Dorsolateral prefrontal cortex (tissue), 120 donors: ENCODE measurements at regions of chr9 and their contacts with region 1.

Region 1: GRCh38 chr9:34633851-34634550 is 3.6 kb downstream of the SIGMAR1 start:
- DNase-seq: peak in 8 of 10 donors; percentile 61 to 79 (median 73)
- H3K4me3 ChIP-seq: no peak overlapping the region
- H3K27ac ChIP-seq: peak overlapping the region in 2 of 59 donors; percentile 14 to 36
- H3K27me3 ChIP-seq: peaks cover 0 to 10% (median 0%) of the 10 kb centered on the region in 45 donors
- CTCF ChIP-seq: peak; percentile 61 to 95 (median 89)

Region 2: GRCh38 chr9:34513567-34514214 is 120.3 kb before region 1 on chr9:
- intact Hi-C with region 1: no loop called
- DNase-seq: peak in 2 of 10 donors; percentile 28 to 38
- H3K4me3 ChIP-seq: no peak overlapping the region
- H3K27ac ChIP-seq: peak overlapping the region in 45 of 59 donors; percentile 8 to 87 (median 62)
- H3K27me3 ChIP-seq: no peaks in the 10 kb centered on the region
- CTCF ChIP-seq: no peak

Region 3: GRCh38 chr9:34611829-34612630 is 22.0 kb before region 1 on chr9 and contains the start of gene RPP25L:
- intact Hi-C with region 1: loop called (anchors 1 to 2 kb)
- DNase-seq: peak; percentile 61 to 88 (median 82)
- H3K4me3 ChIP-seq: peak within 1 kb of the TSS; percentile 38 to 94 (median 81)
- H3K27ac ChIP-seq: peak within 1 kb of the TSS in 58 of 59 donors; percentile 37 to 96 (median 90)
- H3K27me3 ChIP-seq: no peaks in the 10 kb centered on the region
- CTCF ChIP-seq: peak in 26 of 56 donors; percentile 12 to 53 (median 30)
- total RNA-seq, gene RPP25L: 12.3 to 32.2 (median 20.6) TPM

Region 4: GRCh38 chr9:34620061-34620994 is 13.7 kb before region 1 on chr9 and contains the start of gene DCTN3:
- intact Hi-C with region 1: loop called in 1 of 2 experiments (anchors 2 kb)
- DNase-seq: peak; percentile 92 to 99 (median 96)
- H3K4me3 ChIP-seq: peak within 1 kb of the TSS; percentile 63 to 100 (median 90)
- H3K27ac ChIP-seq: peak within 1 kb of the TSS in 22 of 59 donors; percentile 1 to 86 (median 31)
- H3K27me3 ChIP-seq: peaks cover 0 to 32% (median 19%) of the 10 kb centered on the region in 45 donors
- CTCF ChIP-seq: peak in 45 of 56 donors; percentile 6 to 67 (median 37)
- total RNA-seq, gene DCTN3: 83.5 to 180 (median 139) TPM

Region 5: GRCh38 chr9:34876096-34876495 is 242.1 kb after region 1 on chr9:
- intact Hi-C with region 1: no loop called
- DNase-seq: no peak
- H3K4me3 ChIP-seq: no peak overlapping the region
- H3K27ac ChIP-seq: no peak overlapping the region
- H3K27me3 ChIP-seq: peaks cover 0 to 6% (median 0%) of the 10 kb centered on the region in 45 donors
- CTCF ChIP-seq: no peak